HEK293T (cell line): ENCODE measurements at regions of chr2 and their contacts with region 1.

Region 1: DNA sequence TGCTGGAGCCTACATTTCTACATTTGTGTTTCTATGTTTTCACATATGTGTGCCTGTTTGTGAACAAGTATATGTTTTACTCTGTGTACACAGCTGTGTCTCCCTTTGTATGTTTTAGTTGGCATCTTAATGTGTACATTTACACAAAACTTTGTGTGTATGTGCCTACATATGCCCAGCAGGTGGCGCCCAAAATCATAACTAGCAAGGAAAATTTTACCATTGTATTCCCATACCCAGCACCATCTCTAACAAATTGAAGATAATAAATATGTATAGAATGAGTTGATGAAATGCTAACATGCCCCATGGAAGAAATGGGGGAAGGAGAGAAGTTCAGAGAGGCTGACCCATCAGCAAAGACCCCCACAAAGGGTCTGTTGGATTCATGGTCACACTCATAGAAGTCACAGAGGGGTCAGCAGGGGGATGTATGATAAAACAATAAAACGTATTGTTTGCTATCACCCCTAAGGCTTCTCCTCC is 48.1 kb downstream of the PKDCC start:
- DNase-seq: peak; percentile 49

Region 2: DNA sequence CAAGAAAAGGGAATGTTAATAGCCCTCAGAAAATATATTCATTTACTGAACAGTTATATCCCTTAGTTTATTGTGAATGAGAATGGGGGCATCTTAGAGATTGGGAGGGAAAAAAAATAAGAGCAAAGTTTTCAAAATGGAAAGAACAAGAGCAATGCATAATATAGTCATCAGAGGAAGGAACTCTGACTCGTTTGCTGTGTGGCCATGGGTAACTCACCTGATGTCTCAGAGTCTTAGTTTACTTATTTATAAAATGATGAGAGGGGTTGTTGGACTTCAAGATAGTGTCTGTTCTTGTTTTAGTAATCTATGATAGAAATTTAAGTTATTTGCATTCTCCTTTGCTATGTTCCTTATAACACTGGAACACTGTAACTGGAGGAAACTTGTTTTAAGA is 143.8 kb after region 1 on chr2:
- CTCF ChIA-PET with region 1: interaction called, 13 read pairs
- POLR2A ChIA-PET with region 1: no interaction called
- DNase-seq: no peak